A549 (cell line): ENCODE measurements at regions of chr15 and their contacts with region 1.

Region 1: GRCh38 chr15:68304589-68305337 is 27.2 kb downstream of the FEM1B start:
- DNase-seq: no peak
- ATAC-seq: peak; percentile 10 to 11; a peak in 3 of 6 replicates
- H3K4me3 ChIP-seq: no peak overlapping the region
- H3K27ac ChIP-seq: peak overlapping the region in 1 of 2 experiments; percentile 58; a peak in 2 of 6 replicates
- H3K4me1 ChIP-seq: peaks cover 47% of the 10 kb centered on the region
- CTCF ChIP-seq: no peak
- EP300 ChIP-seq: no peak
- POLR2A ChIP-seq: no peak
- RAD21 ChIP-seq: no peak

Region 2: GRCh38 chr15:68130851-68131250 is 173.9 kb before region 1 on chr15:
- CTCF ChIA-PET with region 1: no interaction called
- POLR2A ChIA-PET with region 1: no interaction called
- DNase-seq: no peak
- ATAC-seq: no peak
- H3K4me3 ChIP-seq: no peak overlapping the region
- H3K27ac ChIP-seq: no peak overlapping the region
- H3K4me1 ChIP-seq: no peaks in the 10 kb centered on the region
- CTCF ChIP-seq: no peak
- EP300 ChIP-seq: no peak
- POLR2A ChIP-seq: no peak
- RAD21 ChIP-seq: no peak

Region 3: GRCh38 chr15:68187559-68187958 is 117.2 kb before region 1 on chr15:
- CTCF ChIA-PET with region 1: no interaction called
- POLR2A ChIA-PET with region 1: no interaction called
- DNase-seq: no peak
- ATAC-seq: peak in 1 of 2 experiments; percentile 40; a peak in 3 of 6 replicates
- H3K4me3 ChIP-seq: no peak overlapping the region
- H3K27ac ChIP-seq: no peak overlapping the region
- H3K4me1 ChIP-seq: no peaks in the 10 kb centered on the region
- CTCF ChIP-seq: no peak
- EP300 ChIP-seq: no peak
- POLR2A ChIP-seq: no peak
- RAD21 ChIP-seq: no peak

Region 4: DNA sequence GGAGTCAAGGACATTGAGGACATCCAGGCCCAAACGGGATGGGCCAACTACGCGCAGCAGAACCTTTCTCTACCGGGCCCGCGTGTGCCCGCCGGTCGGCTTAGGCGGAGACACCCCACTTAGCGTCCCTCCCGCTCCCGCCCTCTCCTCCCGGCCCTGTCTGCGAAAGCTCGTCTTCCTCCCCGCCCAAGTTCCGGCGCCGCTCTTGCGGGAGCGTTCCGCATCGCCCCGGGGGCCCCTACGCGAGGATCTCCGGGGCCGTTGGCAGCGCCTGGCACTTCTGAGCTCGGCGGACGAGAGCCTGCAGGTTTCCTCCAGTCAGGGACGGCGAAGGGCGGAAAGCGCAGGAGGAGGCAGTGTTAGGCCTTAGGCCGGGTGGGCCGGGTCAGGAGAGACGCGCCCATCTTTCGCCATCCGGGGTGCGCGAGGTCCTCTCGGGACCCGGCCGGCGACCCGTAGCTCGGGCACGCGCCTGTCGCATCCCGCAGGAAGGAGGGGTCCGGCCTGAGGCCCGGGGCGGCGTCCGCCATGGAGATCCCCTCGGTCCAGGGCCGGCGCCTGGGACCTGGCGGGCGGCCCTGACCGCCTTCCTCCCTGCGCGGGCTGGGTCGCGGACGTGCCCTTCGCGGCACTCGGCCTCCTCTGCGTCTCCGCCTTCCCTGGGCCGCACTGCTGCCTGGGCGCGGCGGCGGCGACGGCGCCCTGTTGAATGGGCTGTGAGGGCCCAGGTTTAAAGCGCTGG is 27.0 kb before region 1 on chr15 and contains the start of gene FEM1B:
- CTCF ChIA-PET with region 1: interaction called, 47 read pairs
- POLR2A ChIA-PET with region 1: interaction called, 17 read pairs
- DNase-seq: peak; percentile 93 to 98
- ATAC-seq: peak; percentile 83 to 86
- H3K4me3 ChIP-seq: peak within 1 kb of the TSS; percentile 69
- H3K27ac ChIP-seq: peak within 1 kb of the TSS; percentile 94 to 97
- H3K4me1 ChIP-seq: peaks cover 68% of the 10 kb centered on the region
- CTCF ChIP-seq: peak; percentile 37; the same call in 2 of the 3 replicates
- EP300 ChIP-seq: no peak
- POLR2A ChIP-seq: peak; percentile 67
- RAD21 ChIP-seq: no peak; a peak in 1 of 5 replicates
- polyA plus RNA-seq, gene FEM1B: 59.1 and 103 TPM in 2 replicates

Region 5: DNA sequence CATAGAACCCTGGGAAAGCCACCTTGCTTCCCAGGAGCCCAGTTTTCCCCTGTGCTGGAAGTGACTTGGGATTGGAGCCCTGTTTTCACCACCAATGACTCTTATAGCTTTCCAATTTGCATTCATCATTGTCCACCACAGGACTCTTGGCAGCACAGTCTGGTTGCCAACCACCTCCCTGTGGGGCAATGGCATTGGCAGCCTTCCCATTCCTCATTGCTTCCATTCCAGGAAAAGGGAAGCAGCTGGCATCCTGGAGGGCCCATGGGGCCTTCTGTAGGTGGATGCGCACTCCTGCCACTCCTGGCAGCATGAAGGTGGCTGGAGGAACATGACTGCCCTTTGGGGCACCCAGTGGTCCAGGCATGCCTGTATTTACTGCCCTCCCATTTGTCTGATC is 30.5 kb after region 1 on chr15:
- CTCF ChIA-PET with region 1: interaction called, 25 read pairs
- POLR2A ChIA-PET with region 1: no interaction called
- DNase-seq: peak in 1 of 2 experiments; percentile 22
- ATAC-seq: peak in 1 of 2 experiments; percentile 23; a peak in 3 of 6 replicates
- H3K4me3 ChIP-seq: no peak overlapping the region
- H3K27ac ChIP-seq: peak overlapping the region; percentile 35 to 66; a peak in 4 of 6 replicates
- H3K4me1 ChIP-seq: peaks cover 32% of the 10 kb centered on the region
- CTCF ChIP-seq: no peak
- EP300 ChIP-seq: no peak
- POLR2A ChIP-seq: no peak
- RAD21 ChIP-seq: no peak

Region 6: GRCh38 chr15:68372291-68372811 is 67.6 kb after region 1 on chr15:
- CTCF ChIA-PET with region 1: interaction called, 37 read pairs
- POLR2A ChIA-PET with region 1: no interaction called
- DNase-seq: peak; percentile 46 to 66
- ATAC-seq: peak; percentile 86 to 96
- H3K4me3 ChIP-seq: no peak overlapping the region
- H3K27ac ChIP-seq: peak overlapping the region in 1 of 2 experiments; percentile 7; a peak in 2 of 6 replicates
- H3K4me1 ChIP-seq: no peaks in the 10 kb centered on the region
- CTCF ChIP-seq: peak; percentile 29
- EP300 ChIP-seq: no peak
- POLR2A ChIP-seq: no peak
- RAD21 ChIP-seq: peak; percentile 36 to 42; a peak in 3 of 5 replicates

Region 7: GRCh38 chr15:68441045-68441743 is 136.4 kb after region 1 on chr15:
- CTCF ChIA-PET with region 1: interaction called, 10 read pairs
- POLR2A ChIA-PET with region 1: no interaction called
- DNase-seq: no peak
- ATAC-seq: no peak
- H3K4me3 ChIP-seq: no peak overlapping the region
- H3K27ac ChIP-seq: no peak overlapping the region
- H3K4me1 ChIP-seq: no peaks in the 10 kb centered on the region
- CTCF ChIP-seq: no peak
- EP300 ChIP-seq: no peak
- POLR2A ChIP-seq: no peak
- RAD21 ChIP-seq: no peak